IMR-90 (cell line): ENCODE measurements at regions of chr4 and their contacts with region 1.

Region 1: GRCh38 chr4:73258686-73259570 is at the start of gene ANKRD17:
- DNase-seq: peak; percentile 91
- ATAC-seq: peak; percentile 81
- H3K4me3 ChIP-seq: peak within 1 kb of the TSS; percentile 83
- H3K27ac ChIP-seq: peak within 1 kb of the TSS; percentile 96
- H3K4me1 ChIP-seq: no peaks in the 10 kb centered on the region
- H3K27me3 ChIP-seq: no peaks in the 10 kb centered on the region
- CTCF ChIP-seq: 0 out of 2 replicates have a peak, but pooled peaks have one; percentile 1
- POLR2A ChIP-seq: peak; percentile 93
- RAD21 ChIP-seq: 0 out of 2 replicates have a peak, but pooled peaks have one; percentile 25
- total RNA-seq, gene ANKRD17: 75.3 and 77.2 TPM in 2 replicates

Region 2: GRCh38 chr4:73069338-73070073 is 189.4 kb before region 1 on chr4 and contains the start of gene COX18:
- CTCF ChIA-PET with region 1: no interaction called
- POLR2A ChIA-PET with region 1: no interaction called
- dilution Hi-C with region 1: no loop called
- in situ Hi-C with region 1: no loop called
- intact Hi-C with region 1: loop called (anchors 1 kb)
- DNase-seq: peak; percentile 99
- ATAC-seq: peak; percentile 91
- H3K4me3 ChIP-seq: peak within 1 kb of the TSS; percentile 66
- H3K27ac ChIP-seq: peak within 1 kb of the TSS; percentile 82
- H3K4me1 ChIP-seq: no peaks in the 10 kb centered on the region; the same call in 1 of the 2 replicates
- H3K27me3 ChIP-seq: no peaks in the 10 kb centered on the region
- CTCF ChIP-seq: no peak
- POLR2A ChIP-seq: peak; percentile 65
- RAD21 ChIP-seq: no peak
- total RNA-seq, gene COX18: 20.6 and 22.0 TPM in 2 replicates

Region 3: DNA sequence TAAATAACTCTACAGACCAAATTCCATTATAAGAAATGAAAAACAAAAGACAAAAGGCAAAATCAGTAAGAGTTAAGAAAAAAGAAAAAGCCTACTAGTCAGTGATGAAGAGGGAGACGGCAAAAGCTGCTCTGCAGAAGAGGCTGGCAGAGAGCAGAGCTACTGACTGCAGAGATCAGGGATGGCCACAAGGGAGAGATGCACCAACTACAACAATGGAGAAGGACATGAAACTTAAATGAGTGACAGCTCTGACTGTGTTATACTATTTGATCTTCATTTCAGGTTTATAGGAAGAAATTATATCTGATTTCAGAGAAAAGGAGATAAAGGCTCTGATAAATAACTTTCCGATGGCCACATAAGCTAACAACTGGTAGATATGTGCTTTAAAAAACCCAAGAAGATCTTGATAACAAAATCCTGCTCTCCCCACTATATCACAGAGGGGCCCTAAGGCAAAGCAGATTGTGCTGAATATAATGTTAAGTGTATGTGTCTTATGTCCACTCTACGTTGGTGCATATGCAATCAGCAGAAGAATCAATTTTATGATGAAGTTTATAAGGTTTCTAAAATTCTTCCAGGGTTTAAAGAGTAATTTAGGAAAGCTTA is 131.0 kb before region 1 on chr4:
- CTCF ChIA-PET with region 1: interaction called, 6 read pairs
- POLR2A ChIA-PET with region 1: no interaction called
- dilution Hi-C with region 1: no loop called
- in situ Hi-C with region 1: no loop called
- intact Hi-C with region 1: loop called (anchors 5 kb)
- DNase-seq: peak; percentile 5
- ATAC-seq: peak; percentile 73
- H3K4me3 ChIP-seq: no peak overlapping the region
- H3K27ac ChIP-seq: no peak overlapping the region
- H3K4me1 ChIP-seq: no peaks in the 10 kb centered on the region
- H3K27me3 ChIP-seq: no peaks in the 10 kb centered on the region
- CTCF ChIP-seq: 0 out of 2 replicates have a peak, but pooled peaks have one; percentile 20
- POLR2A ChIP-seq: no peak
- RAD21 ChIP-seq: peak; percentile 22; the same call in 1 of the 2 replicates

Region 4: GRCh38 chr4:73222466-73223257 is 36.3 kb before region 1 on chr4:
- CTCF ChIA-PET with region 1: no interaction called
- POLR2A ChIA-PET with region 1: no interaction called
- dilution Hi-C with region 1: no loop called
- in situ Hi-C with region 1: no loop called
- intact Hi-C with region 1: loop called (anchors 5 kb)
- DNase-seq: peak; percentile 97
- ATAC-seq: peak; percentile 100
- H3K4me3 ChIP-seq: peak overlapping the region; percentile 50
- H3K27ac ChIP-seq: peak overlapping the region; percentile 0; the same call in 1 of the 2 replicates
- H3K4me1 ChIP-seq: peaks cover 3% of the 10 kb centered on the region
- H3K27me3 ChIP-seq: no peaks in the 10 kb centered on the region
- CTCF ChIP-seq: no peak
- POLR2A ChIP-seq: peak; percentile 90
- RAD21 ChIP-seq: no peak

Region 5: DNA sequence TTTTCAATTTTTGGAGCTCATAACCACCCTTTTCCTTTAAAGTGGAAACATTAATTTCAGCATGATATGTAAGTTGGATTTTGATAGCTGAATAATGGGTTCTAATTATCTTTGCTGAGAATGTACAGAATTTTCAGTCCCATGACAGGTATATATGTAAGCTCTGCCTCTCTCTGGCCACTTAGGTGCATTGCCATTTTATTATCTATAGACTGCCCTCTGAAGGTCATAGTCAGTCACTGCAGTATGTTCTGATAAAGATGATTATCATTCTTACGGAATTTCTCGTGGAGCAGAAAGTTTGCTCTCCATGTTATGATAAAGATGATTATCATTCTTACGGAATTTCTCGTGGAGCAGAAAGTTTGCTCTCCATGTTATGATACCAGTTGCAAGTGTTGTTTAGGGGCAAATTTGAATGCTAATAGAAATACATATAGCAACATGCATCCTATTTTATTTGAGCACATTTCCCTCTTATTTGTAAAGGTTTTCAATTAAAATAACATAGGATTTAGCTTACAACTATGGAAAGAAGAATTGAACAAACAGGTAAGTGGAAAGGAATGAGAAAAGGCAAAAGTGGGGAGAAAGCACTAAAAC is 187.5 kb after region 1 on chr4:
- CTCF ChIA-PET with region 1: interaction called, 3 read pairs
- POLR2A ChIA-PET with region 1: no interaction called
- dilution Hi-C with region 1: no loop called
- in situ Hi-C with region 1: no loop called
- intact Hi-C with region 1: loop called (anchors 5 kb)
- DNase-seq: peak; percentile 63
- ATAC-seq: peak; percentile 84
- H3K4me3 ChIP-seq: no peak overlapping the region
- H3K27ac ChIP-seq: no peak overlapping the region
- H3K4me1 ChIP-seq: peaks cover 3% of the 10 kb centered on the region
- H3K27me3 ChIP-seq: peaks cover 2% of the 10 kb centered on the region; the same call in 1 of the 2 replicates
- CTCF ChIP-seq: peak; percentile 92
- POLR2A ChIP-seq: no peak
- RAD21 ChIP-seq: peak; percentile 58